CD8-positive, alpha-beta memory T cell (primary cell): ENCODE measurements at regions of chr10 and their contacts with region 1.

Region 1: GRCh38 chr10:110497438-110498086 is at the start of gene DUSP5:
- DNase-seq: peak; percentile 91 to 96 (median 95)
- H3K4me3 ChIP-seq: peak within 1 kb of the TSS; percentile 72
- H3K4me3 Mint-ChIP-seq: peak within 1 kb of the TSS; percentile 88 to 99 (median 95)
- H3K27ac ChIP-seq: peak within 1 kb of the TSS; percentile 75
- H3K27ac Mint-ChIP-seq: peak within 1 kb of the TSS; percentile 91 to 96 (median 95)
- H3K4me1 ChIP-seq: peaks cover 55% of the 10 kb centered on the region
- H3K4me1 Mint-ChIP-seq: peaks cover 57 to 58% (median 57%) of the 10 kb centered on the region in 3 donors
- H3K27me3 ChIP-seq: no peaks in the 10 kb centered on the region
- H3K27me3 Mint-ChIP-seq: peaks cover 0 to 3% of the 10 kb centered on the region in 2 donors
- total RNA-seq, gene DUSP5: 68.5 to 69.8 TPM

Region 2: DNA sequence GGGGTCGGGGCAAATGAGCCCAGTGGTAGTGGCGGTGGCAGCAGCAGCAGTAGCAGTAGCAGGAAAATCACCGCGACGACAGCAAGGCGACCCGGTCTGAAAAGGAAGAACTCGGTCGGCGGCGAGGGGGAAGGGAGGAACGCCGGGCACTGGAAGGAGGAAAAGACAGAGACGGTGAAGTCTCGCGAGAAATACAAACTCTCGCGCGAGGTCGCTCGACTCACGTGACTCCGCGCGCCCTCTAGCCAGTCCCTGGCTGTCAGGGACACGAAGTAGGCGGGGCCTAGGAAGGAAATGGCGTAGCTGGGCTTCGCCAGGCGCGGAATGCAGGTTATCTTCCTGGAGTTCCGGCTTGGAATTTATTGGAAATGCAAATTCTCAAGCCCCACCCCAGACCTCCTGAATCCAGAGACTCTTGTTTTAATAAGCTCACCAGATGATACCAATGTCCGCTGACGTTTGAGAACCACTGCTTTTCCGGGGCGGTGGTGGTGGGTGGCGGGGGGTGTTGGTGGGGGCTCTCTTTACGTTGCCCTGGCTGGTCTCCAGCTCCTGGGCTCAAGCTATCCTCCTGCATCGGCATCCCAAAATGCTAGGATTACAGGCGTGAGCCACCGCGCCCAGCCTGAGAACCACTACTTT is 192.7 kb before region 1 on chr10 and contains the start of gene SMNDC1:
- CTCF ChIA-PET with region 1: interaction called, 8 read pairs
- POLR2A ChIA-PET with region 1: interaction called, 10 read pairs
- DNase-seq: peak; percentile 95 to 98 (median 96)
- H3K4me3 ChIP-seq: peak within 1 kb of the TSS; percentile 70
- H3K4me3 Mint-ChIP-seq: peak within 1 kb of the TSS; percentile 93 to 99 (median 98)
- H3K27ac ChIP-seq: peak within 1 kb of the TSS; percentile 80
- H3K27ac Mint-ChIP-seq: peak within 1 kb of the TSS; percentile 92 to 99 (median 99)
- H3K4me1 ChIP-seq: peaks cover 50% of the 10 kb centered on the region
- H3K4me1 Mint-ChIP-seq: peaks cover 49 to 59% (median 55%) of the 10 kb centered on the region in 3 donors
- H3K27me3 ChIP-seq: no peaks in the 10 kb centered on the region
- H3K27me3 Mint-ChIP-seq: peaks cover 0 to 4% of the 10 kb centered on the region in 2 donors
- total RNA-seq, gene SMNDC1: 54.9 to 60.1 TPM

Region 3: DNA sequence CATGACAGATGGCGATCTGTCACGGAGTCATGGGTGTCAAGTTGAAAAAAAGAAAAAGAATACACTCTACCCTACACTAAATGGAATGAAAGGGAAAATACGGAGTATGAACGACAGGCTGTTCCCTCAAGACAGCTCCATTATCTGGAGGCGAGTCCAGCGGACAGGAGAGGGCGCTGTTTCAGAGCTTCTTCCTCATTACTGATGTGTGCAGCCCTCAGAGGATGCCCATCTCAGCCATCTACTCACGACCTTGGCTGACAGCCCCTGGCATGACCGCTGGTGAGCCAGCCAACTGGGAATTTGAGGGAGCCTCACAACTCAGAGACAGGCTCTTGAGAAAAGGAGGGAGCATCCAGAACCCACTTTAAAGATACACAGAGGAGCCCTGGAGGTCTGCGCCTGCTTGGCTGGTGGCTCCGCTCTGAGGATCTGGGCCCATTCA is 143.2 kb before region 1 on chr10:
- CTCF ChIA-PET with region 1: interaction called, 60 read pairs
- POLR2A ChIA-PET with region 1: interaction called, 8 read pairs
- DNase-seq: peak; percentile 43 to 84 (median 64)
- H3K4me3 ChIP-seq: no peak overlapping the region
- H3K4me3 Mint-ChIP-seq: peak overlapping the region in 6 of 7 donors; percentile 17 to 76 (median 45)
- H3K27ac ChIP-seq: no peak overlapping the region
- H3K27ac Mint-ChIP-seq: peak overlapping the region in 7 of 8 donors; percentile 35 to 99 (median 85)
- H3K4me1 ChIP-seq: peaks cover 48% of the 10 kb centered on the region
- H3K4me1 Mint-ChIP-seq: peaks cover 54 to 55% (median 54%) of the 10 kb centered on the region in 3 donors
- H3K27me3 ChIP-seq: no peaks in the 10 kb centered on the region
- H3K27me3 Mint-ChIP-seq: no peaks in the 10 kb centered on the region

Region 4: GRCh38 chr10:110414563-110415309 is 82.8 kb before region 1 on chr10:
- CTCF ChIA-PET with region 1: interaction called, 10 read pairs
- POLR2A ChIA-PET with region 1: interaction called, 6 read pairs
- DNase-seq: peak; percentile 77 to 96 (median 86)
- H3K4me3 ChIP-seq: no peak overlapping the region
- H3K4me3 Mint-ChIP-seq: peak overlapping the region; percentile 6 to 84 (median 45)
- H3K27ac ChIP-seq: no peak overlapping the region
- H3K27ac Mint-ChIP-seq: peak overlapping the region; percentile 49 to 94 (median 91)
- H3K4me1 ChIP-seq: peaks cover 36% of the 10 kb centered on the region
- H3K4me1 Mint-ChIP-seq: peaks cover 45 to 52% (median 52%) of the 10 kb centered on the region in 3 donors
- H3K27me3 ChIP-seq: no peaks in the 10 kb centered on the region
- H3K27me3 Mint-ChIP-seq: no peaks in the 10 kb centered on the region

Region 5: DNA sequence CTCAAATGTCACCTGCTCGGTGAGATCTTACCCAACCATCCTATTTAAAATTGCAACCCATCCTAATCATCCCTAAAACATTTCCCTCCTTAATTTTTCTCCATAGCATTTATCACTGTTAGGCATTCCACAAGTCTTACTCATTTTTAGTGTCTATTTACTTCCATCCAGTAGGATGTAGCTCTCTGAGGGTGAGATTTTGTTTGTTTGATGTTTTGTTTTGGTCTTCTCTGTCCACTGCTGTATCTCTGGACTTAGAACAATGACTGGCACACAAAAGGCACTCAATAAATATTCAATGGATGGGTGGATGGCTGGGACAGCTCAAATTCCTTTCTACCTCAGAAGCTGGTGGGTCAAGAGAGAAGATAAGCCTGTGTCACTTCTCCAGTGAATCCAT is 15.6 kb before region 1 on chr10:
- CTCF ChIA-PET with region 1: no interaction called
- POLR2A ChIA-PET with region 1: no interaction called
- DNase-seq: no peak
- H3K4me3 ChIP-seq: no peak overlapping the region
- H3K4me3 Mint-ChIP-seq: no peak overlapping the region
- H3K27ac ChIP-seq: no peak overlapping the region
- H3K27ac Mint-ChIP-seq: no peak overlapping the region
- H3K4me1 ChIP-seq: no peaks in the 10 kb centered on the region
- H3K4me1 Mint-ChIP-seq: no peaks in the 10 kb centered on the region
- H3K27me3 ChIP-seq: no peaks in the 10 kb centered on the region
- H3K27me3 Mint-ChIP-seq: peaks cover 3 to 14% of the 10 kb centered on the region in 2 donors

Region 6: GRCh38 chr10:110528224-110528997 is 30.8 kb after region 1 on chr10:
- CTCF ChIA-PET with region 1: no interaction called
- POLR2A ChIA-PET with region 1: no interaction called
- DNase-seq: no peak
- H3K4me3 ChIP-seq: no peak overlapping the region
- H3K4me3 Mint-ChIP-seq: peak overlapping the region in 5 of 7 donors; percentile 30 to 68 (median 60)
- H3K27ac ChIP-seq: no peak overlapping the region
- H3K27ac Mint-ChIP-seq: peak overlapping the region in 4 of 8 donors; percentile 35 to 89 (median 82)
- H3K4me1 ChIP-seq: peaks cover 23% of the 10 kb centered on the region
- H3K4me1 Mint-ChIP-seq: peaks cover 19 to 33% (median 33%) of the 10 kb centered on the region in 3 donors
- H3K27me3 ChIP-seq: no peaks in the 10 kb centered on the region
- H3K27me3 Mint-ChIP-seq: peaks cover 1 to 4% of the 10 kb centered on the region in 2 donors

Region 7: DNA sequence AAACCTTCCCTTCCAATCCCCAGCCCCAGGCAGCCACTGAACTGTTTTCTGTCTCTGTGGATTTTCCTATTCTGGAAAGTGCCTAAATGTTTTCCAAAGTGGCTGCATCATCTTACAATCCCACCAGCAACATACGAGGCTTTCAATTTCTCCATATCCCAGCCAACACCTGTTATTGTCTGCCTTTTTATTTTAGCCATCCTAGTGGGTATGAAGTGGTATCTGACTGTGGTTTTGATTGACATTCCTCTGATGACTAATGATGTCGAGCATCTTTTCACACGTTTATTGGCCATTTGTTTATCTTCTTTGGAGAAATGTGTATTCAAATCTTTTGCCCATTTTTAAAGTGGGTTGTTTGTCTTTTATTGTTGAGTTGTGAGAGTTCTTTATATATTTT is 63.7 kb after region 1 on chr10:
- CTCF ChIA-PET with region 1: no interaction called
- POLR2A ChIA-PET with region 1: no interaction called
- DNase-seq: no peak
- H3K4me3 ChIP-seq: no peak overlapping the region
- H3K4me3 Mint-ChIP-seq: no peak overlapping the region
- H3K27ac ChIP-seq: no peak overlapping the region
- H3K27ac Mint-ChIP-seq: no peak overlapping the region
- H3K4me1 ChIP-seq: no peaks in the 10 kb centered on the region
- H3K4me1 Mint-ChIP-seq: peaks cover 3 to 9% (median 4%) of the 10 kb centered on the region in 3 donors
- H3K27me3 ChIP-seq: peaks cover 9% of the 10 kb centered on the region
- H3K27me3 Mint-ChIP-seq: peaks cover 12 to 37% of the 10 kb centered on the region in 2 donors